Dorsolateral prefrontal cortex (tissue), 120 donors: ENCODE measurements at regions of chr3 and their contacts with region 1.

Region 1: GRCh38 chr3:123884203-123884831 is at the start of gene MYLK:
- DNase-seq: peak in 1 of 10 donors; percentile 11
- H3K4me3 ChIP-seq: peak within 1 kb of the TSS; percentile 18 to 69 (median 51)
- H3K27ac ChIP-seq: no peak within 1 kb of the TSS
- H3K27me3 ChIP-seq: peaks cover 0 to 6% (median 0%) of the 10 kb centered on the region in 45 donors
- CTCF ChIP-seq: no peak
- total RNA-seq, gene MYLK: 27.6 to 135 (median 66.4) TPM

Region 2: DNA sequence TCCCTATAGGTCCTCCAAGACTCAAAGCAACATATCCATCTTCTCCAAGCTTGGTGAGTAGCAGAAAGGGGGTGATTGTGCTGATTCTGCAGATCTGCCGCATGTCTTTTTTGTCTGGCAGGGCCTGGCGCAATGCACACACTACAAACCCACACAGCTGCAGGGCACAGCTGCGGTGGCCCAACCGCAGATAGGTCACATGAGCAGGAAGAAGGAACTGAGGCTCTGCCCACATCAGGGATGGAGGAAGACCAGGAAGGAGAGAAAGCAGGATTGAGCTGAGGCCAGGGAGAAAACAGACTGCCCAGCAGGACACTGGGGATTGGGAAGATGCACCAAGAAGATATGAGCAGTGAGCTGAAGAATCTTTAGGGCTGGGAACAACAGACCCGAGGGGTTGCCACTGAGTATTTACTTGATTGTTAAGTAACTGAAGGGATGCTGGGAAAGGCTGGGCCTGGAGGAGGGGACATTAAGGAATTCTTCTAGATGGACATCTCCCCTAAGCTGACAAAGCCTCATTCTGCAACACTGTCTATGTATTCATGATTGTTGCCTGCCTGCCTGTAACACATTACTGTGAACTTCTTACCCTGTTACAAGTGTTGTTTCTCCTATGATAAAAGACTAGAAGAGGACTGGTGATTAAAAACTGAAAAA is 126.9 kb before region 1 on chr3:
- intact Hi-C with region 1: loop called in 1 of 2 experiments (anchors 10 kb)
- DNase-seq: peak in 9 of 10 donors; percentile 43 to 79 (median 75)
- H3K4me3 ChIP-seq: peak overlapping the region in 30 of 59 donors; percentile 1 to 50 (median 18)
- H3K27ac ChIP-seq: peak overlapping the region in 57 of 59 donors; percentile 2 to 91 (median 66)
- H3K27me3 ChIP-seq: no peaks in the 10 kb centered on the region
- CTCF ChIP-seq: peak in 3 of 56 donors; percentile 38 to 40 (median 38)